Activated CD4-positive, alpha-beta T cell treated with anti-CD3 and anti-CD28 coated beads, Interleukin-2, amount 10 ng/mL, durations not matched to agents 24 days and 14 days (primary cell): ENCODE measurements at regions of chr4 and their contacts with region 1.

Region 1: DNA sequence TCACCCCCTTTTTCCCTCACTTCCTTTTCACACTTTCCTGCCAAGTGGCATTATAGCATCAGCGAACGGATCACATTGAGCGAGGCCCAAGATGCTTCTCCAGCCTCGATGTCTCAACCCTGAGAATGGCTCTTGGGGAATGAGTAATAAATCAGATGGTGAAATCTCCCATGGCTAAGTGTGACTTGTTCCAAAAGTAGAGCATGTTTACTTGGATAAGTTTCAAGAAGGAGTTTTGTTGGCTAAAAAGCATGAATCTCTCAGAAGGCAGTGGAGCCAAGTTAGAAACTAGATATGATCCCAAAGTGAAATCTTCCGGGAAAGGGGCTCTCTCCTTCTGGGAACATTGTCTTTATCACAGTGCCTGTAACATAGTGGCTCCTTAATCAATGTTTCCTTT is 316.3 kb downstream of the CAMK2D start:
- DNase-seq: no peak
- H3K4me3 Mint-ChIP-seq: no peak overlapping the region
- H3K27ac Mint-ChIP-seq: peak overlapping the region; percentile 66
- H3K4me1 Mint-ChIP-seq: peaks cover 28% of the 10 kb centered on the region
- H3K27me3 Mint-ChIP-seq: peaks cover 1% of the 10 kb centered on the region

Region 2: GRCh38 chr4:113371111-113371510 is 74.2 kb before region 1 on chr4:
- intact Hi-C with region 1: no loop called
- DNase-seq: no peak
- H3K4me3 Mint-ChIP-seq: no peak overlapping the region
- H3K27ac Mint-ChIP-seq: no peak overlapping the region
- H3K4me1 Mint-ChIP-seq: no peaks in the 10 kb centered on the region
- H3K27me3 Mint-ChIP-seq: no peaks in the 10 kb centered on the region

Region 3: GRCh38 chr4:113468165-113469022 is 23.1 kb after region 1 on chr4:
- intact Hi-C with region 1: loop called (anchors 1 kb)
- DNase-seq: peak; percentile 61
- H3K4me3 Mint-ChIP-seq: no peak overlapping the region
- H3K27ac Mint-ChIP-seq: peak overlapping the region; percentile 80
- H3K4me1 Mint-ChIP-seq: peaks cover 18% of the 10 kb centered on the region
- H3K27me3 Mint-ChIP-seq: no peaks in the 10 kb centered on the region

Region 4: DNA sequence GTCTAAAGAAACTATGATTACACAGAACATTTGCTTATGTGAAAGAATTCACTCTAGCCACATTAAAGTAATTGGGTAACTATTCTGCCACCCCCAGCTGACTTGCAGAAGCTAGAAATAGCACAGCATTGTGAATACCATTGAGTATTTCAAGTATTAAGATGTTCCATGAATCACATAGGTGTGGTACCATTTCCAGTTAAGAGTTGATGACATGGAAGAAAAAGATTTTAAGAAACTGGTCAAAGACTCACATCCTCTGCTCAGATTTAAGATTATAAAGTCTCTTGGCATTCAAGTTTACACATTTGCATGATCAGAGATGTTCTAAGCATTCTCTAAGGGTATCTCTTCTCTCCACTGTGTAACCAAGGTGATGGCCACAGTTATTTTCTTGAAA is 28.7 kb after region 1 on chr4:
- intact Hi-C with region 1: loop called (anchors 1 kb)
- DNase-seq: no peak
- H3K4me3 Mint-ChIP-seq: no peak overlapping the region
- H3K27ac Mint-ChIP-seq: peak overlapping the region; percentile 79
- H3K4me1 Mint-ChIP-seq: peaks cover 27% of the 10 kb centered on the region
- H3K27me3 Mint-ChIP-seq: no peaks in the 10 kb centered on the region

Region 5: GRCh38 chr4:113524096-113524495 is 78.8 kb after region 1 on chr4:
- intact Hi-C with region 1: loop called (anchors 1 kb)
- DNase-seq: no peak
- H3K4me3 Mint-ChIP-seq: no peak overlapping the region
- H3K27ac Mint-ChIP-seq: peak overlapping the region; percentile 48
- H3K4me1 Mint-ChIP-seq: peaks cover 12% of the 10 kb centered on the region
- H3K27me3 Mint-ChIP-seq: no peaks in the 10 kb centered on the region